RWPE1 (cell line): ENCODE measurements at regions of chr17 and their contacts with region 1.

Region 1: GRCh38 chr17:5438716-5439445 is at the start of gene C1QBP:
- DNase-seq: peak; percentile 89
- H3K27ac ChIP-seq: peak within 1 kb of the TSS; percentile 75
- CTCF ChIP-seq: peak; percentile 98

Region 2: GRCh38 chr17:5241861-5242671 is 196.8 kb before region 1 on chr17:
- CTCF ChIA-PET with region 1: no interaction called
- POLR2A ChIA-PET with region 1: no interaction called
- DNase-seq: no peak
- H3K27ac ChIP-seq: peak overlapping the region; percentile 39
- CTCF ChIP-seq: no peak

Region 3: GRCh38 chr17:5419356-5419958 is 19.4 kb before region 1 on chr17 and contains the start of gene NUP88:
- CTCF ChIA-PET with region 1: interaction called, 13 read pairs
- POLR2A ChIA-PET with region 1: interaction called, 9 read pairs
- DNase-seq: peak; percentile 98
- H3K27ac ChIP-seq: peak within 1 kb of the TSS; percentile 88
- CTCF ChIP-seq: no peak

Region 4: DNA sequence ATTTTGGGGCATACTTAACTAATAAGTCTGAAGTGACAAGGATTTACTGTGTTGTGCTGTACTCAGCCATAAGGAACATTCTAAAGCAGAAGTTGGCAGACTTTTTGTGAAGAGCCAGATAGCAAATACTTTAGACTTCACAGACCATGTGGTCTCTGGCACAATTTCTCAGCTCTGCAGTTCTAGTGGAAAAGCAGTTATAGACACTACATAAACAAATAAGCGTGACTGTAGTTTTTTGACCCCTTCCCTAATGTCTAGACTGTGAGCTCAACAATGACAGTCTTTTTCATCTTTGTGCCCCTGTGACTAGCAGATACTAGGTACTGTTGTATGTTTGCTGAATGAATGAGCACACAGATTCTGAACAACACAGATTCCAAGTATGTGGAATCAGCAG is 14.0 kb before region 1 on chr17:
- CTCF ChIA-PET with region 1: interaction called, 13 read pairs
- POLR2A ChIA-PET with region 1: interaction called, 9 read pairs
- DNase-seq: no peak
- H3K27ac ChIP-seq: no peak overlapping the region
- CTCF ChIP-seq: no peak